ENCODE measurements at regions of chr3 and their contacts with region 1.

Region 1: GRCh38 chr3:170726976-170727661 is 141.2 kb upstream of the SLC7A14 start:
- DNase-seq: no peak
- H3K4me3 ChIP-seq: peak overlapping the region; percentile 36
- H3K27ac ChIP-seq: peak overlapping the region; percentile 99
- H3K27me3 ChIP-seq: no peaks in the 10 kb centered on the region
- CTCF ChIP-seq: no peak

Region 2: GRCh38 chr3:170751083-170751898 is 24.2 kb after region 1 on chr3:
- CTCF ChIA-PET with region 1: interaction called, 3 read pairs
- POLR2A ChIA-PET with region 1: interaction called, 13 read pairs
- DNase-seq: peak; percentile 63
- H3K4me3 ChIP-seq: no peak overlapping the region
- H3K27ac ChIP-seq: peak overlapping the region; percentile 91
- H3K27me3 ChIP-seq: no peaks in the 10 kb centered on the region
- CTCF ChIP-seq: no peak

Measured in AG04450 (cell line).